ENCODE measurements at regions of chr12 and their contacts with region 1.

Region 1: GRCh38 chr12:64610149-64610678 is at the start of gene RASSF3:
- DNase-seq: peak; percentile 44
- ATAC-seq: peak; percentile 75
- H3K4me3 ChIP-seq: peak within 1 kb of the TSS; percentile 89 to 97 (median 95)
- H3K27ac ChIP-seq: peak within 1 kb of the TSS; percentile 80
- H3K4me1 ChIP-seq: peaks cover 34% of the 10 kb centered on the region
- H3K27me3 ChIP-seq: no peaks in the 10 kb centered on the region; a peak in 1 of 5 replicates
- CTCF ChIP-seq: no peak
- EP300 ChIP-seq: no peak
- POLR2A ChIP-seq: peak in 1 of 2 experiments; percentile 52; a peak in 2 of 4 replicates
- RAD21 ChIP-seq: no peak
- total RNA-seq, gene RASSF3: 16.0 and 21.3 TPM in 2 replicates

Region 2: DNA sequence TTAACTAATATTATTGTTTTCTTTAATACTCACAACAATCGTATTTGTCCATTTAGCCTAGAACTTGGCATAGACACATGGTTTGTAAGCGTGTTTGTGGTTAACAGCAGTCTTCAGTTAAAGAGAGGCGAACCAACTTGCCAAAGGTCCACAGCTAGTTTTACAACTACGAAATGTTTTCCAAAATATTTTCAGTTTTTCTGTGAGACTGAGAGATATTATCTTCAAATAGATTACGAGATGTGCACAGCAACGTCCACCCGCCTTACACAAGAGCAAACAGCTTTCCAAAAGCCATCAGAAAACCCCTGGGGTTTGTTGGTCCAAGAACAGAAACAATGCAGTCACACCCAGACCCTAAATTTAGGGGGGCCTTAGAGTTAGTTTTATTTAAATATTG is 58.5 kb before region 1 on chr12:
- CTCF ChIA-PET with region 1: interaction called, 3 read pairs
- POLR2A ChIA-PET with region 1: no interaction called
- in situ Hi-C with region 1: loop called (anchors 5 kb)
- intact Hi-C with region 1: loop called (anchors 1 kb)
- DNase-seq: no peak
- ATAC-seq: no peak
- H3K4me3 ChIP-seq: no peak overlapping the region
- H3K27ac ChIP-seq: no peak overlapping the region
- H3K4me1 ChIP-seq: peaks cover 22% of the 10 kb centered on the region
- H3K27me3 ChIP-seq: no peaks in the 10 kb centered on the region
- CTCF ChIP-seq: no peak
- EP300 ChIP-seq: no peak
- POLR2A ChIP-seq: no peak
- RAD21 ChIP-seq: no peak

Region 3: GRCh38 chr12:64625243-64626077 is 15.2 kb after region 1 on chr12:
- CTCF ChIA-PET with region 1: no interaction called
- POLR2A ChIA-PET with region 1: interaction called, 23 read pairs
- in situ Hi-C with region 1: no loop called
- intact Hi-C with region 1: loop called (anchors 2 kb)
- DNase-seq: peak; percentile 85
- ATAC-seq: peak; percentile 98
- H3K4me3 ChIP-seq: peak overlapping the region; percentile 55 to 68 (median 67)
- H3K27ac ChIP-seq: peak overlapping the region; percentile 94
- H3K4me1 ChIP-seq: peaks cover 38% of the 10 kb centered on the region
- H3K27me3 ChIP-seq: no peaks in the 10 kb centered on the region
- CTCF ChIP-seq: peak; percentile 44
- EP300 ChIP-seq: peak in 1 of 2 experiments; percentile 52; a peak in 2 of 4 replicates
- POLR2A ChIP-seq: peak in 1 of 2 experiments; percentile 56; a peak in 1 of 4 replicates
- RAD21 ChIP-seq: no peak

Region 4: DNA sequence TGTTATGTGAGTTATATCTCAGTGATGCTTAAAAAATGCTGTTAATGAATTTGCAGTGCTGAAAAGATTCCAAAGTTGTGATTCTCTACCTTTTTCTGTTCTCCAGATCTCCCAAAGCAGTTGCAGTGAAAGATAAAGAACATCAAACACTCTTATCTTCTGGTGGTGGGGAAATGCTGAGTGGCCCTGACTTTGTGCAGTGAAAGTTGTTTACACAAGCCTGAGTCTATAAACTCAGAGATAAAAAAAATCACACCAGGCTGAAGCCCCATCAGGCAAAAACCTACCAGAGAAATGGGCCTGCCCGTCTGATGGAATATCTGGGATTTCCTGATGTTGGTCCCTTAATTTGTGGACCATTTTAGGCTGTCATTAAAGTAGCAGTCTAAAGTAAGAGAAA is 46.2 kb after region 1 on chr12:
- CTCF ChIA-PET with region 1: no interaction called
- POLR2A ChIA-PET with region 1: no interaction called
- in situ Hi-C with region 1: no loop called
- intact Hi-C with region 1: loop called (anchors 5 kb)
- DNase-seq: peak; percentile 90
- ATAC-seq: peak; percentile 92
- H3K4me3 ChIP-seq: no peak overlapping the region
- H3K27ac ChIP-seq: peak overlapping the region; percentile 14
- H3K4me1 ChIP-seq: peaks cover 68% of the 10 kb centered on the region
- H3K27me3 ChIP-seq: no peaks in the 10 kb centered on the region
- CTCF ChIP-seq: no peak
- EP300 ChIP-seq: peak in 1 of 2 experiments; percentile 95; a peak in 3 of 4 replicates
- POLR2A ChIP-seq: no peak
- RAD21 ChIP-seq: no peak

Region 5: GRCh38 chr12:64714551-64714968 is 104.3 kb after region 1 on chr12:
- CTCF ChIA-PET with region 1: no interaction called
- POLR2A ChIA-PET with region 1: no interaction called
- in situ Hi-C with region 1: no loop called
- intact Hi-C with region 1: no loop called
- DNase-seq: no peak
- ATAC-seq: no peak
- H3K4me3 ChIP-seq: no peak overlapping the region
- H3K27ac ChIP-seq: no peak overlapping the region
- H3K4me1 ChIP-seq: no peaks in the 10 kb centered on the region
- H3K27me3 ChIP-seq: no peaks in the 10 kb centered on the region
- CTCF ChIP-seq: no peak
- EP300 ChIP-seq: no peak
- POLR2A ChIP-seq: no peak
- RAD21 ChIP-seq: no peak